ENCODE measurements at regions of chr12 and their contacts with region 1.

Region 1: GRCh38 chr12:97404543-97404942 is 58.1 kb upstream of the RMST start:
- DNase-seq: peak; percentile 51
- H3K4me3 ChIP-seq: no peak overlapping the region
- H3K27ac ChIP-seq: no peak overlapping the region
- H3K4me1 ChIP-seq: no peaks in the 10 kb centered on the region
- CTCF ChIP-seq: peak; percentile 87

Region 2: GRCh38 chr12:97148941-97149559 is 255.5 kb before region 1 on chr12:
- CTCF ChIA-PET with region 1: no interaction called
- POLR2A ChIA-PET with region 1: no interaction called
- intact Hi-C with region 1: loop called (anchors 10 kb)
- DNase-seq: peak; percentile 65
- H3K4me3 ChIP-seq: no peak overlapping the region
- H3K27ac ChIP-seq: no peak overlapping the region
- H3K4me1 ChIP-seq: no peaks in the 10 kb centered on the region
- CTCF ChIP-seq: peak; percentile 90

Region 3: GRCh38 chr12:97375310-97375709 is 29.2 kb before region 1 on chr12:
- CTCF ChIA-PET with region 1: no interaction called
- POLR2A ChIA-PET with region 1: no interaction called
- intact Hi-C with region 1: no loop called
- DNase-seq: no peak
- H3K4me3 ChIP-seq: no peak overlapping the region
- H3K27ac ChIP-seq: no peak overlapping the region
- H3K4me1 ChIP-seq: no peaks in the 10 kb centered on the region
- CTCF ChIP-seq: no peak

Measured in OCI-LY7 (cell line).